PC-9 (cell line): ENCODE measurements at regions of chr5 and their contacts with region 1.

Region 1: DNA sequence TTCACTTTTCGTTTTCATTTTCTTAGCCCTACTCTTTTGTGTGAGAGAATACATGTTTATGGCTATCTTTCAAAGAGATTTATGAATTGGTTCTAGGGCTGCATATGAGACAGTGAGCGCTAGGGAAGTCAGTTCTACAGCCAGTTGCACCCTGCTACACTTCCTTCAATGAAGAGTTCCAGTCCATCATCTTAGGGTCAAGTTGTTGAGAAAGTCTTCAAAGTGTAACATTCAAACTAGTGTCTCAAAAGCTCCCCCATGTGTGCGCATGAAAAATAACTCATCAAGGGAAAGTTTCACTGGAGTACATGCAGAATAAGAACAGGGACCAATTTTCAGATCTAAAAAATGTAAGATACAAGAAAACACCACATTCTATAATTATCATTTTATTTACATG is 317.2 kb downstream of the DEPDC1B start:
- DNase-seq: no peak
- H3K4me3 ChIP-seq: no peak overlapping the region
- H3K27ac ChIP-seq: no peak overlapping the region
- H3K4me1 ChIP-seq: no peaks in the 10 kb centered on the region
- H3K27me3 ChIP-seq: no peaks in the 10 kb centered on the region
- CTCF ChIP-seq: peak; percentile 42; the same call in 1 of the 2 replicates

Region 2: DNA sequence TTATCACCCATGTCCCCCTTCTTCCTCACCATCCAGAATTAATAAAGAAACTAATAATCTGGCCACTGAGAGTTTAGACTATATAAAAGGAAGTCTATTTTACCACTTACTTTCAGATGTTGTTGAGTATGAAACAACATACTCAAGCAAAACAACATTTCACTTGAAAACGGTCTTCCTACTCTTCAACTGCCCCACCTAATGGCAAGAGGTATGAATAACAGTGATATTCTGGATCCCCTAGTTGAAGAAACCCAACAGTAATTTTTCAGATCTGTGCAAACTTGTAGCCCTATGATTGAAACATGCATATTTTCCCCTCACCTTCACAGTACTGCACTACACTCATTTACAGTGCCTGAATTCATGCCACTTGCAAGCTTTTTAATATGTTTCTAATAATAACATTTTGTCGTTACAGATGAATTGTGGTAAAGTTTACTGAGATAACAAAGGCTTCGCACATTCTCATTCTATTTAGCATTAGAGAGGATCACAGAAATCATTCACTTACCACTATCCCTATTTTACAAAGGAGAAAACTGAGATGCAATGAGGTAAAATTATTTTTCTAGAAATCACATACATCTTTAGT is 221.3 kb before region 1 on chr5:
- CTCF ChIA-PET with region 1: no interaction called
- POLR2A ChIA-PET with region 1: no interaction called
- intact Hi-C with region 1: loop called (anchors 10 kb)
- DNase-seq: peak in 1 of 2 experiments; percentile 0
- H3K4me3 ChIP-seq: no peak overlapping the region
- H3K27ac ChIP-seq: no peak overlapping the region
- H3K4me1 ChIP-seq: no peaks in the 10 kb centered on the region
- H3K27me3 ChIP-seq: no peaks in the 10 kb centered on the region
- CTCF ChIP-seq: peak; percentile 60